Aorta (tissue), 5 donors: ENCODE measurements at regions of chr20 and their contacts with region 1.

Region 1: GRCh38 chr20:9616833-9617489 is 102.6 kb downstream of the LAMP5 start:
- DNase-seq: peak in 1 of 2 donors; percentile 60
- ATAC-seq: peak; percentile 70
- H3K4me3 ChIP-seq: no peak overlapping the region
- H3K27ac ChIP-seq: no peak overlapping the region
- H3K4me1 ChIP-seq: no peaks in the 10 kb centered on the region
- H3K27me3 ChIP-seq: no peaks in the 10 kb centered on the region

Region 2: GRCh38 chr20:8756410-8756809 is 860.6 kb before region 1 on chr20:
- intact Hi-C with region 1: loop called in 1 of 2 experiments (anchors 10 kb)
- DNase-seq: no peak
- ATAC-seq: no peak
- H3K4me3 ChIP-seq: no peak overlapping the region
- H3K27ac ChIP-seq: no peak overlapping the region
- H3K4me1 ChIP-seq: no peaks in the 10 kb centered on the region
- H3K27me3 ChIP-seq: no peaks in the 10 kb centered on the region

Region 3: GRCh38 chr20:9884061-9884460 is 267.1 kb after region 1 on chr20:
- intact Hi-C with region 1: loop called in 1 of 2 experiments (anchors 10 kb)
- DNase-seq: no peak
- ATAC-seq: no peak
- H3K4me3 ChIP-seq: no peak overlapping the region
- H3K27ac ChIP-seq: no peak overlapping the region
- H3K4me1 ChIP-seq: no peaks in the 10 kb centered on the region
- H3K27me3 ChIP-seq: no peaks in the 10 kb centered on the region

Region 4: GRCh38 chr20:9912858-9913434 is 296.0 kb after region 1 on chr20:
- intact Hi-C with region 1: loop called (anchors 1 to 2 kb)
- DNase-seq: peak in 1 of 2 donors; percentile 78
- ATAC-seq: no peak
- H3K4me3 ChIP-seq: no peak overlapping the region
- H3K27ac ChIP-seq: no peak overlapping the region
- H3K4me1 ChIP-seq: peaks cover 0 to 2% of the 10 kb centered on the region in 2 donors
- H3K27me3 ChIP-seq: no peaks in the 10 kb centered on the region

Region 5: DNA sequence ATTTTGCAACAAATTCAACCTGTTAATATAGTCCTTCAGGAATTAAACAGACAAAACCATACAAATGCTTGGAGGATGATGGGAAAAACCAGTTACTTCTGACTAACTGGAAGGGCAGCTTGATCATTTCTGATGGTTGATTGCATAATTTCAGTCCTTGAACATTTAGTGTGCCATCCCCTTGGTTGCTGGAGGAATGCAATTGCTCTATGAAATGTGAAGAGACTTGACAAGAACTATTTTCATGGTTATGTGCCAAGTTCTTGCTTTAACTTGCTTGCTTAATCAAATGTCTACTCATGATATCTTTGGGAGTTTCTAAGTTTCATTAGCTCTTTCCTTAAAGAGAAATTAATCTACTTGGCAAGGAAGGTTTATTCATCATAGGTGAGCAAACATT is 463.0 kb after region 1 on chr20:
- intact Hi-C with region 1: loop called in 1 of 2 experiments (anchors 10 kb)
- DNase-seq: no peak
- ATAC-seq: no peak
- H3K4me3 ChIP-seq: no peak overlapping the region
- H3K27ac ChIP-seq: no peak overlapping the region
- H3K4me1 ChIP-seq: peaks cover 0 to 2% of the 10 kb centered on the region in 2 donors
- H3K27me3 ChIP-seq: no peaks in the 10 kb centered on the region

Region 6: GRCh38 chr20:10434467-10434831 is 817.5 kb after region 1 on chr20:
- intact Hi-C with region 1: loop called in 1 of 2 experiments (anchors 10 kb)
- DNase-seq: peak; percentile 91 to 94
- ATAC-seq: peak; percentile 96
- H3K4me3 ChIP-seq: peak overlapping the region; percentile 69 to 92
- H3K27ac ChIP-seq: peak overlapping the region; percentile 55 to 72
- H3K4me1 ChIP-seq: no peaks in the 10 kb centered on the region
- H3K27me3 ChIP-seq: no peaks in the 10 kb centered on the region